ENCODE measurements at regions of chr17 and their contacts with region 1.

Region 1: GRCh38 chr17:78112518-78113226 is 15.9 kb downstream of the TMC6 start:
- DNase-seq: peak; percentile 83
- H3K4me3 Mint-ChIP-seq: no peak overlapping the region
- H3K27ac Mint-ChIP-seq: peak overlapping the region; percentile 76
- H3K4me1 Mint-ChIP-seq: peaks cover 41% of the 10 kb centered on the region
- H3K27me3 Mint-ChIP-seq: no peaks in the 10 kb centered on the region

Region 2: GRCh38 chr17:78128551-78129350 is 16.1 kb after region 1 on chr17 and contains the start of gene TMC6:
- CTCF ChIA-PET with region 1: interaction called, 113 read pairs
- DNase-seq: peak; percentile 86
- H3K4me3 Mint-ChIP-seq: peak within 1 kb of the TSS; percentile 95
- H3K27ac Mint-ChIP-seq: peak within 1 kb of the TSS; percentile 100
- H3K4me1 Mint-ChIP-seq: peaks cover 42% of the 10 kb centered on the region
- H3K27me3 Mint-ChIP-seq: peaks cover 4% of the 10 kb centered on the region

Region 3: GRCh38 chr17:78140169-78140976 is 27.7 kb after region 1 on chr17:
- CTCF ChIA-PET with region 1: interaction called, 113 read pairs
- DNase-seq: peak; percentile 98
- H3K4me3 Mint-ChIP-seq: no peak overlapping the region
- H3K27ac Mint-ChIP-seq: peak overlapping the region; percentile 88
- H3K4me1 Mint-ChIP-seq: peaks cover 72% of the 10 kb centered on the region
- H3K27me3 Mint-ChIP-seq: no peaks in the 10 kb centered on the region

Measured in activated naive CD4-positive, alpha-beta T cell treated with anti-CD3 and anti-CD28 coated beads, Interleukin-2, amount 10 ng/mL, durations not matched to agents 7 days and 5 days (primary cell).